Activated CD8-positive, alpha-beta T cell treated with anti-CD3 and anti-CD28 coated beads, Interleukin-2, amount 10 ng/mL, durations not matched to agents 7 days and 5 days (primary cell): ENCODE measurements at regions of chr14 and their contacts with region 1.

Region 1: GRCh38 chr14:80987235-80988032 is 32.0 kb downstream of the TSHR start:
- DNase-seq: peak; percentile 77
- ATAC-seq: peak; percentile 78
- H3K4me3 Mint-ChIP-seq: no peak overlapping the region
- H3K27ac Mint-ChIP-seq: no peak overlapping the region
- H3K4me1 Mint-ChIP-seq: peaks cover 6% of the 10 kb centered on the region
- H3K27me3 Mint-ChIP-seq: peaks cover 3% of the 10 kb centered on the region

Region 2: GRCh38 chr14:80781577-80782367 is 205.7 kb before region 1 on chr14:
- CTCF ChIA-PET with region 1: no interaction called
- POLR2A ChIA-PET with region 1: no interaction called
- DNase-seq: no peak
- ATAC-seq: no peak
- H3K4me3 Mint-ChIP-seq: no peak overlapping the region
- H3K27ac Mint-ChIP-seq: no peak overlapping the region
- H3K4me1 Mint-ChIP-seq: no peaks in the 10 kb centered on the region
- H3K27me3 Mint-ChIP-seq: no peaks in the 10 kb centered on the region

Region 3: GRCh38 chr14:80930836-80931389 is 56.5 kb before region 1 on chr14:
- CTCF ChIA-PET with region 1: interaction called, 18 read pairs
- POLR2A ChIA-PET with region 1: no interaction called
- DNase-seq: peak; percentile 77
- ATAC-seq: peak; percentile 94
- H3K4me3 Mint-ChIP-seq: peak overlapping the region; percentile 42
- H3K27ac Mint-ChIP-seq: peak overlapping the region; percentile 77
- H3K4me1 Mint-ChIP-seq: peaks cover 71% of the 10 kb centered on the region
- H3K27me3 Mint-ChIP-seq: no peaks in the 10 kb centered on the region

Region 4: GRCh38 chr14:80954687-80955299 is 32.6 kb before region 1 on chr14:
- CTCF ChIA-PET with region 1: interaction called, 268 read pairs
- POLR2A ChIA-PET with region 1: interaction called, 8 read pairs
- DNase-seq: peak; percentile 79
- ATAC-seq: peak; percentile 56
- H3K4me3 Mint-ChIP-seq: peak overlapping the region; percentile 78
- H3K27ac Mint-ChIP-seq: peak overlapping the region; percentile 71
- H3K4me1 Mint-ChIP-seq: peaks cover 46% of the 10 kb centered on the region
- H3K27me3 Mint-ChIP-seq: peaks cover 23% of the 10 kb centered on the region

Region 5: DNA sequence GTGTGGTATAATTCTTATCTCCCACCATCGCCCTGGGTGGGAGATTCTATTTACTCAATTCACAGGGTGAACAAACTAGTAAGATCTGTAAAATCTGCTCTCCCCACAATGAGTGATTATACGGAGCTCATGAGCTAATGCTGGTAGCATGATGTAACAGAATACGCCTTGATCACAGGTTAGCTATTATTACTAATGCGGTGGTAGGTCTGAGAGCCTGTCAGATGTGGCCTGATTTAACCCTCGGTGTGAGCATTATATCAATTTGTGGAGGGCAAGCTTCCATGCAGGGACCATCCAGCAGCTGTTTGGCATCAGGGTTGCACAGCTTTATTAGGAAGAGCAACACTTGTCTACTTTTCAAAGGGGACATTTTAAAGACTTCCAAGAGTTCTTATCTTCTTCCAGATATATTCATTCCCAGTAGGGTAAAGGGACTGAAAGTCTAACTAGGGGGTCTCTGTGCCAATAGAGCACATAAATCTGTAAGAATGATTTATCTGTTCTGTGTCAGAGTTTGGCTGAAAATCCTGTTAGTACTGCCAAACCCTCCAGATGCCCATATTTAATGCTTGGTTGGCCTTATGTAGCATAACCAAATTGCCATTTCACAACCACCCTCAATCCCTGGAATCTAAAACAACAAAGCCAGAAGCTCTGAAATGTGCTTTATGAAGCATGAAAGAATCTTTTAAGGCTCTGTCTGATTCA is 13.3 kb before region 1 on chr14:
- CTCF ChIA-PET with region 1: interaction called, 76 read pairs
- POLR2A ChIA-PET with region 1: interaction called, 3 read pairs
- DNase-seq: no peak
- ATAC-seq: peak; percentile 35
- H3K4me3 Mint-ChIP-seq: no peak overlapping the region
- H3K27ac Mint-ChIP-seq: no peak overlapping the region
- H3K4me1 Mint-ChIP-seq: peaks cover 28% of the 10 kb centered on the region
- H3K27me3 Mint-ChIP-seq: peaks cover 33% of the 10 kb centered on the region

Region 6: DNA sequence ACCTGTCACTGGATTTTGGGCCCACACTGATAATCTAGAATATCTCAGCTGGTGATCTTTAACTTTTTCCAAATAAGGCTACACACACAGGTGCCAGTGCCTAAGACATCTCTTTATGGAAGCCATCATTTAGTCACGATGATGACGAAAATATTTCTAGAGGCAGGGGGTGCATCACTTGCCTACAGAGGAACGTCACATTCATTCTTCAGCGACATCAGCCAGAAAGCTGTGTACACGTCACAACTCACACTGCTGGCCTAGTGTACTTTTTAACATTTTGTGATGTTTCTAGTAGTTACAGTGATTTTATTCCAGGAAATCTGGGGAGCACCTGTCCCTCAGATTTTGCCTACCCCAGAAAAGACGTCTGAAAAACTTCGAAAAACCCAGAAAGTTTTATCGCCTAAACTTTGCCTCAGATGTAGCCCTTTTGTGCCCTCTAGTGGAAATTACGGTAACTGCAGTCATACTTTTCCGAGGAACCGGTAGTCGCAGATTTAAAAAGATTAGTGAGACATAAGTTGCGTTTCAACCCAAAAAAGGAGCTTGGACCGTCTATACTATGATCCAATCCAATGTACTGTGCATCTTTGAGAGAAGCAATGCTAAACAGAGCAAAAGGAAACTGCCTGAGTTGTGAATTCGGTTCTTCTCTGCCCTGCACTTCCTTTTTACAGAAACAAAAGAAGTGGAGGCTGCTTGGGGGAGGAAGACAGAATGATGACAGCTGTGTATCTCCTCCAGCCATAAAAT is 477.0 kb after region 1 on chr14:
- CTCF ChIA-PET with region 1: interaction called, 18 read pairs
- POLR2A ChIA-PET with region 1: no interaction called
- DNase-seq: peak; percentile 80
- ATAC-seq: peak; percentile 87
- H3K4me3 Mint-ChIP-seq: peak overlapping the region; percentile 80
- H3K27ac Mint-ChIP-seq: peak overlapping the region; percentile 92
- H3K4me1 Mint-ChIP-seq: peaks cover 18% of the 10 kb centered on the region
- H3K27me3 Mint-ChIP-seq: peaks cover under 1% of the 10 kb centered on the region